ENCODE measurements at regions of chr6 and their contacts with region 1.

Region 1: DNA sequence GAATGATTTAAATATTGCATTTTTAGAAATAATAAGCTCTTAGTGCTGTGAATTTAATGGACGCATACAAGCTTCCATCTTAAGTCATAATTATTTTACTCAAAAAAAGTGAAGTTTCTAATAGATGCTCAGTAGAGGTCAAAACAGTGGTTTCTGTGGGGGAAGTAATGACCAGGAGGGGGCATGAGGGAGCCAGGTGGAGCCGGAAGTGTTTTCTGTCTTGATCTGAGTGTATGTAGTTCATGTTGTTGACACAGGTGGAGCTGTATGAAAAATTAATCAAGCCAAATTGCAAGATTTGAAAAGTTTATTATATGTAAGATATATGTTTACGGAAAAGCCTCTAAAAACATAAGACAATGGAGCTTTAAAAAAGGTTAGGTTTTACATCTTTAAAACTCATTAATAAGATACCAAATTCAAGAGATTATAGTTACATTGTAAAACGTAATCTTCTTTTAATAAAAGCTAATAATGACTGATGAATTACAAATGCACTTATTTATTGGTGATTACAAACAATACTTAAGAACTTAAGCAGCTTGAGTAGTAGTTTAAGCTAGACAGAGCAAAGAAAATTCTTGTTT is 68.0 kb downstream of the PLAGL1 start:
- DNase-seq: no peak
- H3K4me3 ChIP-seq: no peak overlapping the region
- H3K27ac ChIP-seq: no peak overlapping the region
- H3K4me1 ChIP-seq: peaks cover 2 to 18% (median 9%) of the 10 kb centered on the region in 4 experiments; a peak in 5 of 7 replicates
- H3K27me3 ChIP-seq: no peaks in the 10 kb centered on the region; a peak in 1 of 7 replicates
- CTCF ChIP-seq: peak; percentile 70 to 98 (median 79)
- EP300 ChIP-seq: no peak
- POLR2A ChIP-seq: no peak
- RAD21 ChIP-seq: peak; percentile 68 to 77

Region 2: GRCh38 chr6:143634493-143634892 is 305.6 kb before region 1 on chr6:
- CTCF ChIA-PET with region 1: no interaction called
- POLR2A ChIA-PET with region 1: no interaction called
- DNase-seq: no peak
- H3K4me3 ChIP-seq: no peak overlapping the region
- H3K27ac ChIP-seq: no peak overlapping the region
- H3K4me1 ChIP-seq: peaks cover 0 to 4% (median 0%) of the 10 kb centered on the region in 4 experiments; a peak in 1 of 7 replicates
- H3K27me3 ChIP-seq: no peaks in the 10 kb centered on the region
- CTCF ChIP-seq: no peak
- EP300 ChIP-seq: no peak
- POLR2A ChIP-seq: no peak
- RAD21 ChIP-seq: no peak

Region 3: GRCh38 chr6:143842902-143843676 is 97.0 kb before region 1 on chr6 and contains the start of gene LTV1:
- CTCF ChIA-PET with region 1: interaction called, 12 read pairs
- POLR2A ChIA-PET with region 1: no interaction called
- DNase-seq: peak; percentile 88 to 96
- H3K4me3 ChIP-seq: peak within 1 kb of the TSS; percentile 80 to 97 (median 96)
- H3K27ac ChIP-seq: peak within 1 kb of the TSS; percentile 87
- H3K4me1 ChIP-seq: 0 out of 7 replicates have a peak, but pooled peaks cover 0 to 2% (median 0%) of the 10 kb centered on the region in 4 experiments
- H3K27me3 ChIP-seq: no peaks in the 10 kb centered on the region; a peak in 1 of 7 replicates
- CTCF ChIP-seq: no peak
- EP300 ChIP-seq: no peak; a peak in 1 of 3 replicates
- POLR2A ChIP-seq: peak in 1 of 2 experiments; percentile 90; a peak in 2 of 3 replicates
- RAD21 ChIP-seq: no peak; a peak in 1 of 4 replicates
- total RNA-seq, gene LTV1: 43.1 and 46.9 TPM in 2 replicates

Region 4: GRCh38 chr6:143901885-143902750 is 38.0 kb before region 1 on chr6:
- CTCF ChIA-PET with region 1: interaction called, 20 read pairs
- POLR2A ChIA-PET with region 1: no interaction called
- DNase-seq: no peak
- H3K4me3 ChIP-seq: no peak overlapping the region
- H3K27ac ChIP-seq: no peak overlapping the region
- H3K4me1 ChIP-seq: no peaks in the 10 kb centered on the region
- H3K27me3 ChIP-seq: no peaks in the 10 kb centered on the region
- CTCF ChIP-seq: no peak
- EP300 ChIP-seq: no peak
- POLR2A ChIP-seq: no peak
- RAD21 ChIP-seq: no peak

Region 5: GRCh38 chr6:143982968-143983367 is 42.9 kb after region 1 on chr6:
- CTCF ChIA-PET with region 1: interaction called, 20 read pairs
- POLR2A ChIA-PET with region 1: no interaction called
- DNase-seq: no peak
- H3K4me3 ChIP-seq: no peak overlapping the region
- H3K27ac ChIP-seq: no peak overlapping the region
- H3K4me1 ChIP-seq: no peaks in the 10 kb centered on the region
- H3K27me3 ChIP-seq: peaks cover 2 to 11% (median 6%) of the 10 kb centered on the region in 4 experiments; a peak in 5 of 7 replicates
- CTCF ChIP-seq: no peak
- EP300 ChIP-seq: no peak
- POLR2A ChIP-seq: no peak
- RAD21 ChIP-seq: no peak

Region 6: GRCh38 chr6:144013486-144013909 is 73.4 kb after region 1 on chr6:
- CTCF ChIA-PET with region 1: interaction called, 366 read pairs
- POLR2A ChIA-PET with region 1: interaction called, 4 read pairs
- DNase-seq: peak in 1 of 2 experiments; percentile 77
- H3K4me3 ChIP-seq: no peak overlapping the region
- H3K27ac ChIP-seq: no peak overlapping the region
- H3K4me1 ChIP-seq: 0 out of 7 replicates have a peak, but pooled peaks cover 0 to 2% (median 0%) of the 10 kb centered on the region in 4 experiments
- H3K27me3 ChIP-seq: peaks cover 0 to 13% (median 10%) of the 10 kb centered on the region in 4 experiments; a peak in 6 of 7 replicates
- CTCF ChIP-seq: peak; percentile 58 to 97 (median 90)
- EP300 ChIP-seq: no peak
- POLR2A ChIP-seq: no peak
- RAD21 ChIP-seq: peak; percentile 97 to 98

Region 7: GRCh38 chr6:144036064-144036834 is 96.1 kb after region 1 on chr6:
- CTCF ChIA-PET with region 1: interaction called, 70 read pairs
- POLR2A ChIA-PET with region 1: no interaction called
- DNase-seq: no peak
- H3K4me3 ChIP-seq: no peak overlapping the region
- H3K27ac ChIP-seq: no peak overlapping the region
- H3K4me1 ChIP-seq: peaks cover 0 to 3% (median 1%) of the 10 kb centered on the region in 4 experiments; a peak in 3 of 7 replicates
- H3K27me3 ChIP-seq: no peaks in the 10 kb centered on the region
- CTCF ChIP-seq: peak in 2 of 3 experiments; percentile 23 to 30; a peak in 2 of 4 replicates
- EP300 ChIP-seq: no peak
- POLR2A ChIP-seq: no peak
- RAD21 ChIP-seq: peak; percentile 63 to 71

Region 8: GRCh38 chr6:144087789-144088426 is 147.8 kb after region 1 on chr6:
- CTCF ChIA-PET with region 1: interaction called, 14 read pairs
- POLR2A ChIA-PET with region 1: no interaction called
- DNase-seq: no peak
- H3K4me3 ChIP-seq: no peak overlapping the region
- H3K27ac ChIP-seq: no peak overlapping the region
- H3K4me1 ChIP-seq: no peaks in the 10 kb centered on the region
- H3K27me3 ChIP-seq: no peaks in the 10 kb centered on the region
- CTCF ChIP-seq: peak in 2 of 3 experiments; percentile 14 to 23; a peak in 2 of 4 replicates
- EP300 ChIP-seq: no peak
- POLR2A ChIP-seq: no peak
- RAD21 ChIP-seq: peak; percentile 26 to 46